ENCODE measurements at regions of chr15 and their contacts with region 1.

Region 1: DNA sequence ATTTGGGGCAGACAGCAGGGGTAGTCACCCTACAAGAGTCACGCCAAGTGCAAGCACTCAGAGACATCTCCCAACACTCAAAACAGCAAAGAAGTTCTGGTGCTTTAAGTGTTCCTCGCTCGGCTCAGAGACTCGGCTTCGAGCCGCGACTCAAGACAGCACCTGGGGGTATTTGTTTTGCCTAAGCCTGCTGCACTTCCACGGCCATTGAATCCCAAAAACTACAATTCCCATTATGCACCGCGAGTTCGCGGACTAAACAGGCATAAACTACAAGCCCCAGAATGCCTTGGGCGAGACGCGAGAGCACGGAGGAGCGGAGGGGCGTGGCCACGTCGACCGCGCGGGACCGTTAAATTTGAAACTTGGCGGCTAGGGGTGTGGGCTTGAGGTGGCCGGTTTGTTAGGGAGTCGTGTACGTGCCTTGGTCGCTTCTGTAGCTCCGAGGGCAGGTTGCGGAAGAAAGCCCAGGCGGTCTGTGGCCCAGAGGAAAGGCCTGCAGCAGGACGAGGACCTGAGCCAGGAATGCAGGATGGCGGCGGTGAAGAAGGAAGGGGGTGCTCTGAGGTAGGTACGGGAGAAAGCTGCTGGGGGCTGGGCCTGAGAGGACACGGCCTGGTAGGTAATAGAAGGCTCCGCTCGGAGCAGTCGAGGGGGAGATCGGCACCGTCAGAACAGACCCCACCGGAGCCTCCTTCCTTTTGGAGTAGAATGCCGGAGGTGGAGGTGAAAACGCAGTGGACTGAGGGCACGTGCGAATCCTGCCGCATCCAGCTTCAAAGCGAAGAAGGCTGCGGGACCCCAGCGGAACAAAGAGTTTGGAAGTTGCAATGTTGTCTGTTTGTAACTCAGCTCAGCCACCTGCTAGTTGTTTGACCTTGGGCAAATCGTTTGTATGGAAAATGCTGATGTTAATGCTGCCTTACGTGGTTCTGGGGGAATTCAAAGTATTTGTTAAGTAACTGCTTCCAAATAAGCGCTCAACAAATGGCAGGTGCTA is at the start of gene BUB1B:
- DNase-seq: peak; percentile 94
- H3K4me3 Mint-ChIP-seq: no peak within 1 kb of the TSS
- H3K27ac Mint-ChIP-seq: no peak within 1 kb of the TSS
- H3K4me1 Mint-ChIP-seq: peaks cover 10% of the 10 kb centered on the region
- H3K27me3 Mint-ChIP-seq: no peaks in the 10 kb centered on the region
- total RNA-seq, gene BUB1B: 70.7 and 73.1 TPM in 2 replicates

Region 2: GRCh38 chr15:40182358-40183029 is 21.5 kb after region 1 on chr15:
- intact Hi-C with region 1: loop called (anchors 2 kb)
- DNase-seq: no peak
- H3K4me3 Mint-ChIP-seq: peak overlapping the region; percentile 51
- H3K27ac Mint-ChIP-seq: peak overlapping the region; percentile 67
- H3K4me1 Mint-ChIP-seq: peaks cover 42% of the 10 kb centered on the region
- H3K27me3 Mint-ChIP-seq: no peaks in the 10 kb centered on the region